Colonic mucosa (tissue), 4 donors: ENCODE measurements at regions of chr17 and their contacts with region 1.

Region 1: DNA sequence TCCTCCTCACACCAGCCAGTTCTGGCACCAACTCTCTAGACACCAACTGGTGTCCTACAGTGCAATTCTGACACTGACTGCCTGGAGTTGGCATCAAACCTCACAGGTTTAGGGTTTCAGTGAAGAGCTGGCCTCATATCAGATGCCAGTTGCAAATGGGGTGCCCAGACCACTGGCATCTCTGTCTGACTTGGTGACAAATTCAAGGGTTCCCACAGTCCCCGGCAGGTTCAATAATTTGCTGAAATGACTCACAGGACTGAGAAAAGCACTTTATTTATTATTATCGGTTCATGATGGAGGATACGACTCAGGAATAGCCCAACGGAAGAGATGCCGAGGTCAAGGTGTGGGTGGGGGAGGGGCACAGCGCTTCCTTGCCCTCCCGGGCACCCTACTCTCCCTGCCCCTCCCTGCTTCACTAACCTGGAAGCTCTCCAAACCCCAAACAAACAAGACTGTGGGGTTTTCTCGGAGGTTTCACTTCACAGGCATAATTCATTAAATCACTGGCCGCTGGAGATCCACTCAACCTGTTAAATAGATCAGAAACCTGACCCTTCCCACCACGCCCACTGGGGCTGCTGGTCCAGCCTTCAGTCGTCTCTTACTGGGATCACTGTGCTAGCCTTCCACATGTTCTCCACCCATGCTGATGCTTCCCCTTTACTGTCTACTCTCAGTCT is 1.7 kb upstream of the NLRP1 start:
- DNase-seq: no peak
- H3K4me3 ChIP-seq: no peak overlapping the region
- H3K27ac ChIP-seq: no peak overlapping the region
- H3K4me1 ChIP-seq: peaks cover 3% of the 10 kb centered on the region
- H3K27me3 ChIP-seq: no peaks in the 10 kb centered on the region
- CTCF ChIP-seq: no peak

Region 2: GRCh38 chr17:6421700-6422604 is 836.0 kb after region 1 on chr17:
- intact Hi-C with region 1: loop called (anchors 1 kb)
- DNase-seq: peak; percentile 80
- H3K4me3 ChIP-seq: no peak overlapping the region
- H3K27ac ChIP-seq: no peak overlapping the region
- H3K4me1 ChIP-seq: no peaks in the 10 kb centered on the region
- H3K27me3 ChIP-seq: no peaks in the 10 kb centered on the region
- CTCF ChIP-seq: peak; percentile 73